ENCODE measurements at regions of chr5 and their contacts with region 1.

Region 1: GRCh38 chr5:112338681-112339337 is 80.3 kb downstream of the EPB41L4A start:
- DNase-seq: peak; percentile 89
- H3K4me3 Mint-ChIP-seq: peak overlapping the region; percentile 52
- H3K27ac Mint-ChIP-seq: peak overlapping the region; percentile 60
- H3K4me1 Mint-ChIP-seq: peaks cover 26% of the 10 kb centered on the region
- H3K27me3 Mint-ChIP-seq: no peaks in the 10 kb centered on the region
- CTCF ChIP-seq: no peak

Region 2: GRCh38 chr5:112350626-112351025 is 11.8 kb after region 1 on chr5:
- CTCF ChIA-PET with region 1: interaction called, 3 read pairs
- POLR2A ChIA-PET with region 1: interaction called, 10 read pairs
- intact Hi-C with region 1: no loop called
- DNase-seq: no peak
- H3K4me3 Mint-ChIP-seq: no peak overlapping the region
- H3K27ac Mint-ChIP-seq: no peak overlapping the region
- H3K4me1 Mint-ChIP-seq: no peaks in the 10 kb centered on the region
- H3K27me3 Mint-ChIP-seq: no peaks in the 10 kb centered on the region
- CTCF ChIP-seq: no peak

Region 3: DNA sequence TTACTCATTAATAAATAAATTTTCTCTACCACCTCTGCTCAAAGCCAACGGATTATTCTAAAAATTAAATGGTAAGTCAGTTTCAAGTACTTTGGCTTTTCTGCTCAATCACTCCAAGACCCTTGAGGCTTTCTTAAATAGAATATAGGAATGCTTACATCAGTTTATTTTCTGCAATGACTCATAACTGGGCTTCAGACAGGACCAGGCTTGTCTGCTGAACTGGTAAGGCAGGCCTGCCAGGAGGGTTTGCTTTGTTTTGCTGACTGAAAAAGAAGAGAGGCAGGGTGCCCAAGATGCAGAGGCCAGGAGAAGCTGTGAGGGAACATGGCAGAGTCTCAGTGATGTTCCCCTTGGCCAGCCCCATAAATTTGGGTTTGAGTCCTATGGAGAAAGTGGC is 140.6 kb after region 1 on chr5:
- CTCF ChIA-PET with region 1: no interaction called
- POLR2A ChIA-PET with region 1: no interaction called
- intact Hi-C with region 1: no loop called
- DNase-seq: peak; percentile 75
- H3K4me3 Mint-ChIP-seq: no peak overlapping the region
- H3K27ac Mint-ChIP-seq: peak overlapping the region; percentile 47
- H3K4me1 Mint-ChIP-seq: peaks cover 11% of the 10 kb centered on the region
- H3K27me3 Mint-ChIP-seq: no peaks in the 10 kb centered on the region
- CTCF ChIP-seq: no peak